Calu3 (cell line): ENCODE measurements at regions of chr1 and their contacts with region 1.

Region 1: DNA sequence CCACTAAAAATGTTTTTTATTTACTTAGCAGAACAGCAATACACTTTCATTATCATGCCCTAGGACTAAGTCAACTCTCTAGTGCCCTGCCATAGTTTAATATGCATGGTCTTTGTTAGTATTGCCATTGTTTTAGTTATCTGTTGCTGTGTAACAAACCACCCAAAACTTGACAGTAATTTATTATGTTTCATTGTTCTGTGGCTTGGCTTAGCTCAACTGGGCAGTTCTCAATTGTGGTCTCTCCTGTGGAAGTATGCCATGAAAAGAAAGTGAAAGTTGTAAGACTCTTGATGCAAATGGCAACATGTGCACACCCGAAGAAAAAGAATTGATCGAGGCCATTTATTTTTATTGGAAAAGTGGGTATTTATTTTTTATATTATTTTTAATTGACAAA is 206.3 kb upstream of the KCTD3 start:
- DNase-seq: no peak
- H3K4me3 Mint-ChIP-seq: no peak overlapping the region
- H3K27ac Mint-ChIP-seq: no peak overlapping the region
- H3K4me1 Mint-ChIP-seq: no peaks in the 10 kb centered on the region
- H3K27me3 Mint-ChIP-seq: no peaks in the 10 kb centered on the region
- CTCF ChIP-seq: no peak

Region 2: DNA sequence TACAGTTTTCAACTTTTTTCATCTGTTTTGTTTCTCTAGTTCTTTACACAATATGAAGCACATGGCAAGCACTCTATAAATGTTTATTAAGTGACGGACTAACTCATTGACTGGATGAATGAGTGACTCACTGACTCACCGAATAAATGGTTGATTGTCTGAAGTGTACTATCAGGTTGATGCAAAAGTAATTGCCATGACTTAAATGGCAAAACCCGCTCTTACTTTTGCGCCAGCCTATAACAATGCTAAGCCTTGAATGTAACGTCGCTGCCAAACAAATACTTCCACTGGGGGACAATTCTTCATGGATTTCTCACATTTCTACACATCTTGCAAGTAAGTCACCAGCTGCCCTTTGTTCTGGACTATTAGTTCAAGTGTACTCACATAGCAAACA is 97.3 kb after region 1 on chr1:
- CTCF ChIA-PET with region 1: no interaction called
- intact Hi-C with region 1: loop called (anchors 5 kb)
- DNase-seq: peak; percentile 37
- H3K4me3 Mint-ChIP-seq: no peak overlapping the region
- H3K27ac Mint-ChIP-seq: peak overlapping the region; percentile 43
- H3K4me1 Mint-ChIP-seq: peaks cover 17% of the 10 kb centered on the region
- H3K27me3 Mint-ChIP-seq: no peaks in the 10 kb centered on the region
- CTCF ChIP-seq: no peak